Psoas muscle (tissue), 8 donors: ENCODE measurements at regions of chr12 and their contacts with region 1.

Region 1: DNA sequence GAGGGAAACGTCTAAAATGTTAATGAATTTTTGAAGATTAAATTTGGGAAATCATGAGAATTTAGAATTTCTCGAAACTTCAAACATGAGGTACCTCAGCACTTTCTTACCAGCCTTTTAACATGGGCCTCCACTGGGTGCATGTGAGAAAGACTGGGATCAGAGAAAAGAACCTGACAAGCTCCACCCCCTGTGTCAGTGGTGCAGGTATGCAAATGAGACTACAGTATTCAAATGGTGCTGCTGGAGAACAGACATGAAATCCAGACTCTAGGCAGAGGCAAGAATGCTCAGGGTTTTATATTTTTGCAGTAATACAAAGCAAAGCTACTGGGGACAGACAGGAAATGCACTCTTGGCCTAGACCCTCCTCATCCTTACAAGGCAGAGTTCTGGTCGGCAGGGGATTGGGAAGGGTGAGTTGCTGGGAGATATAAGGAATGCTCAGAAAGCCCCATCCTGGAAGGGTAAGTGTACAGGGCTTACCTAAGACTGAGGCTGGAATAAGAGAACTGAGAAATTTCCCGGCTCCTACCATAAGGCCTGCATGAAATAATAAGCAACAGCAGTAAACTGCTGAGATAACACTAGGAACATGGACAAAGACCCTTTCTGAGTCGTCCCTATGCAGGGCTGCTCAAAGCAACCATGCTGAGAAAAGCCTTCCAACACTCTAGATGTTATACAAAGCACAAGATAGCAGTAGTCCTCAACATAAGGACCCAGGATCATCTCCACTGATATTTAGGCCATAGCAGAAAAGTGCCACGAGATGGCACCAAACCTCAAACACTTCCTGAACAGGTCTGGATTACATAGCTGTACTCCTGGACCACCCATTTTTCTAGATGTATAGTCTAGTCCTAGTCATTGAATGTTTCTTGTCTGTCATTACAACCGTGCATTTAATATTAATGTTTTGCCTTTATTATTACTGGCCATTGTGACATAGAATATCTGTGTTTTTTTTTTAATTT is 260.8 kb downstream of the RASSF9 start:
- DNase-seq: peak in 1 of 2 donors; percentile 17
- ATAC-seq: peak in 3 of 4 donors; percentile 46 to 67 (median 51)
- H3K4me3 ChIP-seq: no peak overlapping the region
- H3K27ac ChIP-seq: no peak overlapping the region
- H3K4me1 ChIP-seq: no peaks in the 10 kb centered on the region
- H3K27me3 ChIP-seq: no peaks in the 10 kb centered on the region
- CTCF ChIP-seq: peak; percentile 54

Region 2: GRCh38 chr12:85531341-85531740 is 44.1 kb before region 1 on chr12:
- intact Hi-C with region 1: no loop called
- DNase-seq: no peak
- ATAC-seq: no peak
- H3K4me3 ChIP-seq: no peak overlapping the region
- H3K27ac ChIP-seq: no peak overlapping the region
- H3K4me1 ChIP-seq: no peaks in the 10 kb centered on the region
- H3K27me3 ChIP-seq: no peaks in the 10 kb centered on the region
- CTCF ChIP-seq: no peak

Region 3: DNA sequence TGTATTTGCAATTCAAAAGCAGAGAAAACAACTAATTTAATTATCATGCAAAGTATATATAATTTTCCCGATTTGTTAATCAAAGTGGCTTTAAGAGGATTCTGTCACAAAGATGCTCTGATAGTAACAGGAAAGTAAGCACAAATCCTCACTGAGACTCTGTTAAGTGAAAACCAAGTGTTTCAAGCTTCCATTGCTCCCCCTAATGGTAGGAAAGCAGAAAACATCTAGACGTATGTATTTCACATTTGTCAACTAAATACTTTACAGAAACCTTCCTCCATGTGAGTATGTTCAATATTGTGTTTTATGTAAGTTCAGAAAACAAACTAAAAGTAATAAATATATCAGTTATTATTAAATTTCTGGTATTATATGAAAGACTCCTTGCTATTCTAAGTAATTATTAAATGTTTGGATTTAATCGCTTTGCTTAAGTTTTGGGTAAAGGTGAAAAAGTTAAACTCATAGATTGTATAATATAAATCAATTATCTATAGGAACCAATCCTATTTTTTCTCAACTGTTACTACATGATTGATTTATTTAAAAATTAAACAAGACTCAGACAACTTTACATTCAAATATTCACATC is 297.2 kb after region 1 on chr12:
- intact Hi-C with region 1: loop called (anchors 1 to 5 kb)
- DNase-seq: no peak
- ATAC-seq: no peak
- H3K4me3 ChIP-seq: no peak overlapping the region
- H3K27ac ChIP-seq: no peak overlapping the region
- H3K4me1 ChIP-seq: no peaks in the 10 kb centered on the region
- H3K27me3 ChIP-seq: no peaks in the 10 kb centered on the region
- CTCF ChIP-seq: peak; percentile 60